Activated CD8-positive, alpha-beta T cell treated with anti-CD3 and anti-CD28 coated beads, Interleukin-2, amount 10 ng/mL, durations not matched to agents 7 days and 5 days (primary cell): ENCODE measurements at regions of chr11 and their contacts with region 1.

Region 1: GRCh38 chr11:130131961-130132850 is 27.4 kb upstream of the ST14 start:
- DNase-seq: peak; percentile 65
- ATAC-seq: peak; percentile 67
- H3K4me3 Mint-ChIP-seq: no peak overlapping the region
- H3K27ac Mint-ChIP-seq: no peak overlapping the region
- H3K4me1 Mint-ChIP-seq: no peaks in the 10 kb centered on the region
- H3K27me3 Mint-ChIP-seq: no peaks in the 10 kb centered on the region

Region 2: DNA sequence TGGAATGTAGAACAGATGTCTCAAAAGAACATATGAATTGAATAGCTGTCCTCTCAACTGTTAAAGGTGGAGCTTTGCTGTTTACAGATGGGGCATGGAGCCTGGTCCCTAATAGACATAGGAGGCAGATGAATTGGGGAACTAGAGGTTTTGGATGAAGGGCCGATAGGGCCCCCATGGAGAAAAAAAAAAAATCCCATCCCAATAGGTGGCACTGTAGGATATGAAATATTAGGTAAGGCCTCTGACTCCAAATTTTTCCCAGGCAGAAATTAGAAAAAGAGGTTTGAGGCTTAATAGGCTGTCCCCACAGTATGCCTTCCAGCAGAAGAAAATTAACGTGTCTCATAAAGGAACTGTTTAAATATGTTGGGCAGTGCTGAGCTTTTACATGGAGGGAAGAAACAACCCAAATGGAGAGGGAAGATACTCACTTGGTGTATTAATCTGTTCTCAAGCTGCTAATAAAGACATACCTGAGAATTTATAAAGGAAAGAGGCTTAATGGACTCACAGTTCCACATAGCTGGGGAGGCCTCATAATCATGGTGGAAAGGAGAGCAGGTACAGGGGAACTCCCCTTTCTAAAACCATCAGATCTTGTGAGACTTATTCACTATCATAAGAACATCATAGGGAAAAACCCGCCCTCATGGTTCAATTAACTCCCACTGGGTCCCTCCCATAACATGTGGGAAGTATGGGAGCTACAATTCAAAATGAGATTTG is 346.7 kb before region 1 on chr11:
- CTCF ChIA-PET with region 1: interaction called, 11 read pairs
- POLR2A ChIA-PET with region 1: no interaction called
- DNase-seq: no peak
- ATAC-seq: no peak
- H3K4me3 Mint-ChIP-seq: no peak overlapping the region
- H3K27ac Mint-ChIP-seq: no peak overlapping the region
- H3K4me1 Mint-ChIP-seq: no peaks in the 10 kb centered on the region
- H3K27me3 Mint-ChIP-seq: peaks cover 8% of the 10 kb centered on the region

Region 3: GRCh38 chr11:129888451-129888850 is 243.8 kb before region 1 on chr11:
- CTCF ChIA-PET with region 1: interaction called, 36 read pairs
- POLR2A ChIA-PET with region 1: no interaction called
- DNase-seq: peak; percentile 63
- ATAC-seq: peak; percentile 96
- H3K4me3 Mint-ChIP-seq: peak overlapping the region; percentile 39
- H3K27ac Mint-ChIP-seq: peak overlapping the region; percentile 90
- H3K4me1 Mint-ChIP-seq: peaks cover 35% of the 10 kb centered on the region
- H3K27me3 Mint-ChIP-seq: no peaks in the 10 kb centered on the region

Region 4: DNA sequence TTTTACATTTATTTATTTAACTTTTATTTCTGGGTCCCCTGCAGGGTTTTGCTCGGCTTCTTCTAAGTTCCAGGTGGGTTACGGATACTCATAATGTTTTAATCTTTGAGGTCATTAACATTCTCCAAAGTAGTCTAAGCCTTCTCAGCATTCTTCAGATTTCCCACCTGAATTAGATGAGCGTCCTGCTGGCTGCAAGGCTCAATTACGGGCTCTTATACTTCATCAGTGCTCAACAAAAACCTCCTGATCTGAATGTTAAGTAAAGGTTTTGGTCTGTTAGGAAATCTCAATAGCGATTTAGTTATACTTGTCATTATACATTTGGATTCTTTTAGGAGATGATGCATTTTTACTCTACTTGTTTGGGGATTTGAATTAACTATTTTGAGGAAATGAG is 209.5 kb before region 1 on chr11:
- CTCF ChIA-PET with region 1: interaction called, 165 read pairs
- POLR2A ChIA-PET with region 1: no interaction called
- DNase-seq: no peak
- ATAC-seq: no peak
- H3K4me3 Mint-ChIP-seq: no peak overlapping the region
- H3K27ac Mint-ChIP-seq: no peak overlapping the region
- H3K4me1 Mint-ChIP-seq: peaks cover 19% of the 10 kb centered on the region
- H3K27me3 Mint-ChIP-seq: no peaks in the 10 kb centered on the region

Region 5: DNA sequence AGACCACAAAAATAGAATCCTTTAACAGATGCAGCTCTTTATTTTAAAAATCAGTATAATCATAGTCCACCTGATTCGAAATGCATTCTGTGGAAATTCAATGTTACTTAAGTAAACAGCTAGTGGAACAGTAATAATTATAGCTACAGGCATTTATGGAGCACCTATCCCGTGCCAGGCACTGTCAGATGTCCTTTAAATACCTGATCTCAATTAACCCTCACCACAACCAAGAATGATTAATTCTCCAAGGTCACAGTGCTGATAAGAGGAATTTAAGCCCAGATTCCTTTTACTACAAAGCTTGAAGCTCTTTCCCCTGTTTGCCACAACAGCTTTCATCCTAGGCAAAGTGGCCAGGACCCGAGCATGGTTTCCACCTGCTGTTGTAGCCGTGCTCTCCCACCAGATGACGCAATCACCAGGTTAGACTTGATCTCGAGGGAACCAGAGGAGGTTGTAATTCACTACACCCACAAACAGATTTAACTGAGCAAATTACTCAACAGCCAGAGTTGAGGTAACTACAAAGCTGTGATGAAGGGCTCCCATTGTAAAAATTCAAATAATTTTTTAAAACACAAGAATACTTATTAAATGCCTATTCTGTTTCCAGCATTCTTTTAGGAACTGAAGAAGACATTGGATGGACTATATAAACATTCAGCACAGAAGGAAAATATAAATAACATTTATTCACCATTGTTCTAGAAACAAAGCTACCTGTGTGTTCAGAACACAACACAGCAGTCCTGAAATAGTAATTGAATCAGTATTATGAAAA is 139.9 kb before region 1 on chr11:
- CTCF ChIA-PET with region 1: interaction called, 24 read pairs
- POLR2A ChIA-PET with region 1: no interaction called
- DNase-seq: peak; percentile 53
- ATAC-seq: peak; percentile 68
- H3K4me3 Mint-ChIP-seq: no peak overlapping the region
- H3K27ac Mint-ChIP-seq: no peak overlapping the region
- H3K4me1 Mint-ChIP-seq: peaks cover 8% of the 10 kb centered on the region
- H3K27me3 Mint-ChIP-seq: no peaks in the 10 kb centered on the region

Region 6: DNA sequence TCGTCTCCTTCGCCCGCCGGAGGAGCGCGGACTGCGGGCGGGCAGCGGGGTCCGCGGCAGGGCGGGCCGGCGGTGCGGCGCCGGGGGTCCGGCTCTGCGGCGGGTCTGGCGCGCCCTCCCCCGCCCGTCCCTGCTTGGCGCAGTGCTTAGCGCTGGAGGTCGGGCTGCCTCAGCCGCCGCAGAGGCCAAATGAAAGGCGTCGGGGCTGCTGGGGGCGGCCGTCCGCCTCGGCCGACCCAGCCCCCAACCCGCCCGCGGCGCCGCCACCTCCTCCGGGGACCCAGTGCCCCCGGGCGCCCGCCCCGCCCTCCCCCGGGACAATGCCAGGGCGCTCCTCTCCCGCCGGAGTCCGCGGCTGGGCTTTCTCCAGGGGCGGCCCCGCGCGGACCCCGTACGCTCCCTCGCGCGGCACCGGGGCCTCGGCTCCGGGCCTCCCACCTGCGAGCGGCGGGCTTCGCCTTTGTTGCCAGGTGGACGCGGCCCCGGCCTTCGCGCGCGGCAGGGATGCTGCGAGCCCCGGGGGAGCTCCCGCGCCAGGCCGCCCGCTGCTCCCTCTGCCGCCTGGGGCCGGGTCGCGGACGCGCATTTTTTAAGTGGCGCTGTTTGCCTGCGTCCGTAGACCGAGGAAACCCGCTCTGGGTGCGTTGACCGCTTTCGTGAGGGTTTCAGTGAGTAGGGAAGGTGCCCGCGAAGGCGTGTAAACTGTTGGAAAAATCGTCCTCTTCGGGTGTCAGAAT is 61.9 kb before region 1 on chr11:
- CTCF ChIA-PET with region 1: interaction called, 16 read pairs
- POLR2A ChIA-PET with region 1: no interaction called
- DNase-seq: peak; percentile 54
- ATAC-seq: peak; percentile 36
- H3K4me3 Mint-ChIP-seq: peak overlapping the region; percentile 82
- H3K27ac Mint-ChIP-seq: no peak overlapping the region
- H3K4me1 Mint-ChIP-seq: peaks cover 15% of the 10 kb centered on the region
- H3K27me3 Mint-ChIP-seq: peaks cover 30% of the 10 kb centered on the region

Region 7: GRCh38 chr11:130145975-130146776 is 14.0 kb after region 1 on chr11:
- CTCF ChIA-PET with region 1: interaction called, 14 read pairs
- POLR2A ChIA-PET with region 1: no interaction called
- DNase-seq: no peak
- ATAC-seq: peak; percentile 34
- H3K4me3 Mint-ChIP-seq: no peak overlapping the region
- H3K27ac Mint-ChIP-seq: no peak overlapping the region
- H3K4me1 Mint-ChIP-seq: peaks cover 11% of the 10 kb centered on the region
- H3K27me3 Mint-ChIP-seq: no peaks in the 10 kb centered on the region